T-cell (primary cell): ENCODE measurements at regions of chr17 and their contacts with region 1.

Region 1: DNA sequence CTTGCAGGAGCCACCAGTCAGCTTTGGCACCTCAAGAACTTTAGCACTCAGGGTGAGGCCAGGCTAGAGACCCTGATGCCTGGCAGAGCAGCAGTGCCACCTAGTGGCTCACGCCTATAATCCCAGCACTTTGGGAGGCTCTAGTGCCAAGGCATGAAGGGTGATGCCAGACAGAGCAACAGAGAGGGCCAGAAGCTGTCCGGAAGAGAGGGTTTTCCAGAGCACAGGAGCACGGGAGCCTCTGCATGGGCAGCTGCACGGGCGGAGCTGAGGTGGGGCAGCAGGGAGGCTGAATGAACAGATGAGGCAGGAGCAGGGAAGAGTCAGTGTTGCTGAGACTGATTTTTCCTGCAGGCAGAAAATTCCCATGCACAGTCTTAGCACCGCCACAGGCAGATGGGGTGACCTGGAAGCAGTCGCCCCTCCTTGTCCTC is 38.9 kb downstream of the MYH3 start:
- DNase-seq: peak; percentile 5 to 70 (median 39)
- ATAC-seq: peak; percentile 72 to 80 (median 78)
- H3K4me3 ChIP-seq: no peak overlapping the region
- H3K4me3 Mint-ChIP-seq: no peak overlapping the region
- H3K27ac ChIP-seq: no peak overlapping the region
- H3K27ac Mint-ChIP-seq: peak overlapping the region in 1 of 2 donors; percentile 52
- H3K4me1 ChIP-seq: no peaks in the 10 kb centered on the region
- H3K4me1 Mint-ChIP-seq: no peaks in the 10 kb centered on the region
- H3K27me3 ChIP-seq: peaks cover 0 to 11% of the 10 kb centered on the region in 2 experiments
- H3K27me3 Mint-ChIP-seq: peaks cover 3 to 9% of the 10 kb centered on the region in 2 donors

Region 2: DNA sequence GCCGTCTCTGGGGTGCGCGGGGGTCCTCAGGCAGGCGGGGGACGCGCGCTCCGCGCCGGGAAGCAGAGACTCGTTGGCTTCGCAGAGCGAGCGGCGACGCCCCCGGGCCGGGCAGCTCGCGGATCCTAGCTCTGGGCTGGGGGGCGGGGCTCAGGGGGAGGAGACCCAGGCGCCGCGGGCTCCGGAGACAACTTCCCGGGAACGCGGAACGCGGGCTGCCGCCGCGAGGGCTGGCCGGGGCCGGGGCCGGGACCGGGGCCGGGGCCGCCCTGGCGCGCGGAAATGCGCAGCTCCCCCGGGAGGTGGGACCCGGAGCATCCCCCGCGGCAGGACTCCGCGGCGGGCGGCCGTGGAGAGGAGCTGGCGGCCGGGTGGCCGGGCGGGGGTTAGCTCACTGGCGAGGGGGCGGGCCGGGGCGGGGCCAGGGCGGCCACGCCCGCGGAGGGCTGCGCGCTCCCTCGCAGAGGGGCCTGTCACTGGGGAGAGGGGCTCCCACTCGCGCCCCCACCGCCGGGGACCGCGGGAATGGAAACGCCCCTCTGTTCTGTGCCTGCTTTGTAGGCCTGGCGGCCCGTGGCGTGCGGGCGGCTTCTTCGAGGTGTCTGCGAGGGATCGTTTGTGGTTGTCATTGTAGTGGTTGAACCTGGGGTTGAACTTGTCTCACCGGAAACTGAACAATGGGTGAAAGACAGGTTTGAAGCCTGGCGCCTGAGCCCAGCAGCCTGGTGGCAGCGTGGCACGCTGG is 419.5 kb before region 1 on chr17 and contains the start of gene GAS7:
- CTCF ChIA-PET with region 1: no interaction called
- POLR2A ChIA-PET with region 1: no interaction called
- DNase-seq: peak in 34 of 35 experiments; percentile 5 to 75 (median 39)
- ATAC-seq: peak; percentile 45 to 75 (median 70)
- H3K4me3 ChIP-seq: peak within 1 kb of the TSS; percentile 34 to 73
- H3K4me3 Mint-ChIP-seq: peak within 1 kb of the TSS; percentile 53 to 72 (median 66)
- H3K27ac ChIP-seq: no peak within 1 kb of the TSS
- H3K27ac Mint-ChIP-seq: peak within 1 kb of the TSS in 1 of 2 donors; percentile 72
- H3K4me1 ChIP-seq: peaks cover 0 to 18% of the 10 kb centered on the region in 2 experiments
- H3K4me1 Mint-ChIP-seq: peaks cover 0 to 14% (median 8%) of the 10 kb centered on the region in 3 donors
- H3K27me3 ChIP-seq: peaks cover 0 to 37% of the 10 kb centered on the region in 2 experiments
- H3K27me3 Mint-ChIP-seq: peaks cover 16 to 35% of the 10 kb centered on the region in 2 donors
- total RNA-seq, gene GAS7: 0.93 to 10.5 (median 3.8) TPM

Region 3: DNA sequence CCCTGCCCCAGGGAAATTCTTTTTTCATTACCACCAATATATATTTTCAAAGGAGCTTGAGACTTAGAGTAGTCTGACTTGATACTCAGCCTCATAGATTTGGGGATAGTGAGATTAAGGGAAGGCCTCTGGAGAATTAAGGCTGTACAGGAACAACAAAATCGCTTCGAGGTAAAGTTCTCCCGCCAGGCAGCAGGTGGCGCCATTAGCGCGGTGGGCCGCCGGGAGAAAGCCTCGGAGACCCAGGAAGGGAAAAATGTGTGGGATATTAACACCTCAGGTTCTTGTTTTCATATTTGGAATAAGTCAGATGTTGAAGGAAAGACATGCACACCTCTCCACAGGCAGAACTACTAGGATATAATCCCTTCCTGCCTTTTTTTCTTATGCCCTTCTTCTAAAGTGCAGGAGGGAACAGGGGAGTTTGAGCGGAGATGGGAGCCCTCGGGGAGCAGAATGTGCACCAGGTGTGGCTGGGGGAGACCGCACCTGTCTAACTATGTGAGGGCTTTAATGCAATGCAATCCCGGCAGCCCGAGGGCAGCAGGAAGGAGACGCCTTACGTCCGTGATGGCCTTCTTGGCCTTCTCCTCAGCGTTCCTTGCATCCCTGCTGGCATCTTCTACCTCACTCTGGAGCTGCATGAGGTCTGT is 13.0 kb after region 1 on chr17:
- CTCF ChIA-PET with region 1: interaction called, 11 to 16 read pairs
- POLR2A ChIA-PET with region 1: interaction called in 1 of 2 experiments, 3 read pairs
- DNase-seq: peak in 7 of 35 experiments; percentile 8 to 42 (median 13)
- ATAC-seq: no peak
- H3K4me3 ChIP-seq: no peak overlapping the region
- H3K4me3 Mint-ChIP-seq: no peak overlapping the region
- H3K27ac ChIP-seq: no peak overlapping the region
- H3K27ac Mint-ChIP-seq: no peak overlapping the region
- H3K4me1 ChIP-seq: peaks cover 0 to 3% of the 10 kb centered on the region in 2 experiments
- H3K4me1 Mint-ChIP-seq: peaks cover 0 to 8% (median 2%) of the 10 kb centered on the region in 3 donors
- H3K27me3 ChIP-seq: no peaks in the 10 kb centered on the region
- H3K27me3 Mint-ChIP-seq: no peaks in the 10 kb centered on the region

Region 4: DNA sequence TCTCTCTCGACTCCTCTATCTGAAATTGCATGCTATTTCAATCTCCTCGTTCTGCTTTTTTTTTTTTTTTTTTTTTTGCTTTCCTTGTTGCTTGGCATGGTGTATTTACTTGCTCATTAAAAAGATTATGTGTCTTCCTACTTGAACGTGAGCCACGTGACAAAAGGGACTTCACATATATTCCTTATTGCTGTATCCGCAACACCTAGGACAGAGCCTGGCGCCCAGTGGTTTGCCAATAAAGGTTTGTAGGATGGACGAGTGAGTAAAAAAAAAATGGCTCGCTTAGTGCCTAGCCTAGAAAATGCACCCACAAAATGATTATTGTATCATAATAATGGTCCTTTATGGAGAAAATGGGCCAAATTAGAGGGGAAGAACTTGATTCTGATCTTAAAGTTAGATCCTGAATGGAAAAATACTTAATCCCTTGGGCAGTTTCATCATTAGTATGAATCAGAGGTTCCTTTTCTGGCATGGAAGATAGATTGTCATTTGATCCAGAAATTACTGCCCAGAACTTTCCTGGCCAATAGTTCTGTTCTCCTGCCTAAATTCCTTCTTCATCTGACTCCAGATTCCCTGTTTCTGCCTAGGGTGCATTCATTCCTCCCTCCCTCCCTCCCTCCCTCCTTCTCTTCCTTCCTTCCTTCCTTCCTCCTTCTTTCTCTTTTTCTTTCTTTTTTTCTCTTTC is 125.2 kb after region 1 on chr17:
- CTCF ChIA-PET with region 1: interaction called in 1 of 2 experiments, 12 read pairs
- POLR2A ChIA-PET with region 1: no interaction called
- DNase-seq: no peak
- ATAC-seq: no peak
- H3K4me3 ChIP-seq: no peak overlapping the region
- H3K4me3 Mint-ChIP-seq: peak overlapping the region in 1 of 3 donors; percentile 61
- H3K27ac ChIP-seq: no peak overlapping the region
- H3K27ac Mint-ChIP-seq: peak overlapping the region in 1 of 2 donors; percentile 23
- H3K4me1 ChIP-seq: peaks cover 0 to 12% of the 10 kb centered on the region in 2 experiments
- H3K4me1 Mint-ChIP-seq: peaks cover 15 to 23% (median 17%) of the 10 kb centered on the region in 3 donors
- H3K27me3 ChIP-seq: no peaks in the 10 kb centered on the region
- H3K27me3 Mint-ChIP-seq: peaks cover 0 to 4% of the 10 kb centered on the region in 2 donors